ENCODE measurements at regions of chr4 and their contacts with region 1.

Region 1: GRCh38 chr4:41281038-41281634 is 24.4 kb downstream of the UCHL1 start:
- DNase-seq: peak; percentile 34 to 71 (median 61)
- H3K4me3 ChIP-seq: no peak overlapping the region
- H3K27ac ChIP-seq: no peak overlapping the region
- H3K4me1 ChIP-seq: no peaks in the 10 kb centered on the region
- H3K27me3 ChIP-seq: no peaks in the 10 kb centered on the region
- CTCF ChIP-seq: peak; percentile 75 to 98 (median 94)
- POLR2A ChIP-seq: no peak

Region 2: DNA sequence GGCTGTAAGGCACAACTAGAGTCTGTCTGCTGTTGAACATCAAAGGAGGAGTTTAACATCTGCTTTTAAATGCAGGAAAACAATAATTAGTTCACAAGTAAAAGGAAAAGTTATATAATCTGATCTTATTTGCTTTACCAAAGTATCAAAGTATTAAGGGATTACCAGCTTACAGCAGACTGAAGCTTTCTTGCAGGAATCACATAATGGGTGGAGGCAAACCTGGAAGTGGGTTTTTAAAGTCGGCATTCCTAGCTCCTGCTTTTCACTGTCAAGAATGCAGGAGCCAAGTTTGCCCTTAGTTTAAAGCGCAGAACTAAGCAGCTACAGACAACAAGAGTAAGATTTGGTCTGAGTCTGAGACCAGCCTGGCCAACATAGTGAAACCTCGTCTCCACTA is 189.0 kb before region 1 on chr4:
- intact Hi-C with region 1: no loop called
- DNase-seq: no peak
- H3K4me3 ChIP-seq: no peak overlapping the region
- H3K27ac ChIP-seq: no peak overlapping the region
- H3K4me1 ChIP-seq: peaks cover 0 to 3% of the 10 kb centered on the region in 2 donors
- H3K27me3 ChIP-seq: no peaks in the 10 kb centered on the region
- CTCF ChIP-seq: no peak
- POLR2A ChIP-seq: no peak

Region 3: GRCh38 chr4:41185614-41186597 is 95.2 kb before region 1 on chr4:
- intact Hi-C with region 1: no loop called
- DNase-seq: no peak
- H3K4me3 ChIP-seq: no peak overlapping the region
- H3K27ac ChIP-seq: no peak overlapping the region
- H3K4me1 ChIP-seq: peaks cover 0 to 29% of the 10 kb centered on the region in 2 donors
- H3K27me3 ChIP-seq: no peaks in the 10 kb centered on the region
- CTCF ChIP-seq: no peak
- POLR2A ChIP-seq: no peak

Region 4: GRCh38 chr4:41661442-41662076 is 380.4 kb after region 1 on chr4:
- intact Hi-C with region 1: loop called (anchors 2 to 5 kb)
- DNase-seq: peak; percentile 46 to 88 (median 65)
- H3K4me3 ChIP-seq: no peak overlapping the region
- H3K27ac ChIP-seq: peak overlapping the region in 1 of 5 donors; percentile 45
- H3K4me1 ChIP-seq: no peaks in the 10 kb centered on the region
- H3K27me3 ChIP-seq: no peaks in the 10 kb centered on the region
- CTCF ChIP-seq: peak; percentile 84 to 99 (median 91)
- POLR2A ChIP-seq: no peak

Region 5: GRCh38 chr4:41882625-41883347 is 601.6 kb after region 1 on chr4:
- intact Hi-C with region 1: loop called in 1 of 2 experiments (anchors 10 kb)
- DNase-seq: peak in 2 of 7 donors; percentile 28 to 74
- H3K4me3 ChIP-seq: peak overlapping the region in 1 of 4 donors; percentile 57
- H3K27ac ChIP-seq: peak overlapping the region in 1 of 5 donors; percentile 70
- H3K4me1 ChIP-seq: peaks cover 7 to 19% of the 10 kb centered on the region in 2 donors
- H3K27me3 ChIP-seq: peaks cover 44% of the 10 kb centered on the region
- CTCF ChIP-seq: peak; percentile 16 to 72 (median 44)
- POLR2A ChIP-seq: no peak

Measured in adrenal gland (tissue), 19 donors.